OCI-LY7 (cell line): ENCODE measurements at regions of chr11 and their contacts with region 1.

Region 1: GRCh38 chr11:124763156-124763947 is 1.3 kb upstream of the ESAM start:
- DNase-seq: peak; percentile 86
- H3K4me3 ChIP-seq: peak overlapping the region; percentile 71
- H3K27ac ChIP-seq: no peak overlapping the region
- H3K4me1 ChIP-seq: peaks cover 38% of the 10 kb centered on the region
- CTCF ChIP-seq: peak; percentile 79

Region 2: GRCh38 chr11:124644426-124645280 is 118.7 kb before region 1 on chr11:
- CTCF ChIA-PET with region 1: no interaction called
- POLR2A ChIA-PET with region 1: no interaction called
- intact Hi-C with region 1: loop called (anchors 1 kb)
- DNase-seq: peak; percentile 51
- H3K4me3 ChIP-seq: no peak overlapping the region
- H3K27ac ChIP-seq: no peak overlapping the region
- H3K4me1 ChIP-seq: peaks cover 8% of the 10 kb centered on the region
- CTCF ChIP-seq: peak; percentile 94

Region 3: DNA sequence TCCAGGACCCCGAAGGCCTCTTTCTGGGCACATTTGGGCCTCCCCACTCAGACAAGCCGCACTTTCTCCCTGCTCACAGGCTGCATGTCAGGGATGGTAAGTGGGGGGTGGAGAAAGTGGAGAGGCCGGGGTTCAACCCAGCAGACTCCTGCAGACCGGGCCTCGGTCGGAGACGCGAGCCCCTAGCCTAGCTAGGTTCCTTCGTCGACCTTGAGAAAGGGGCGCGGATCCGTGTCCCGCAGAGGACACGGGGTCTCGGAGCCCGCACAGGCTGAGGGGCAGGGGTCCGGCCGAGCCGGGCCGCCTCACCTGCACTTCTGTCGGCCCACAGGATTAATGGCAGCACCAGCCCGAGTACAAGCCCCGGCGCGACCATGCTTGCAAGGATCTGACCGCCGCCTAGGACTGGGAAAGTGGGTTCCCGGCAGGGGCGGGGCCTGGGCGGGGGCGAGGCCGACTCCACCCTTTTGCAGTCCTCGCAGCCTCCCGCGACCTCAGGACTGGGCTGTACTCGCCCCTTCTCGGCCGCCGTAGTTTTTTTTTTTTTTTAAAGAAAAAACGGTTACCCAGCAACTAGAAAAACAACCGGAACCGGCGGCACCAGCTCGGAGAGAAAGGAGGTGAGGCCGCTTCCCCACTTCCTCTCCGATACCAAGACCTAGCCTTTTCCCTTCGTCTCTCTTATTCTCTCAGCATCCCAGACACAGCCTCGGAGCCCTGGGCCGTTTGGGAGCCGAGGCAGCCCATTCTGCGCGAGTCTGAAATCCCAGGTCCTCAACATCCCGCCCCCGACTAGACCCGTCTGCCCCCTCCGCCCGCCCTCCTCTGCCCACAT is 89.8 kb before region 1 on chr11 and contains the starts of genes SIAE and SPA17:
- CTCF ChIA-PET with region 1: interaction called, 9 read pairs
- POLR2A ChIA-PET with region 1: interaction called, 3 read pairs
- intact Hi-C with region 1: loop called (anchors 1 kb)
- DNase-seq: peak; percentile 93
- H3K4me3 ChIP-seq: peak within 1 kb of the TSS; percentile 79
- H3K27ac ChIP-seq: peak within 1 kb of the TSS; percentile 30
- H3K4me1 ChIP-seq: peaks cover 45% of the 10 kb centered on the region
- CTCF ChIP-seq: no peak
- total RNA-seq, gene SIAE: 2.6 and 4.8 TPM in 2 replicates
- total RNA-seq, gene SPA17: 2.4 and 5.1 TPM in 2 replicates

Region 4: DNA sequence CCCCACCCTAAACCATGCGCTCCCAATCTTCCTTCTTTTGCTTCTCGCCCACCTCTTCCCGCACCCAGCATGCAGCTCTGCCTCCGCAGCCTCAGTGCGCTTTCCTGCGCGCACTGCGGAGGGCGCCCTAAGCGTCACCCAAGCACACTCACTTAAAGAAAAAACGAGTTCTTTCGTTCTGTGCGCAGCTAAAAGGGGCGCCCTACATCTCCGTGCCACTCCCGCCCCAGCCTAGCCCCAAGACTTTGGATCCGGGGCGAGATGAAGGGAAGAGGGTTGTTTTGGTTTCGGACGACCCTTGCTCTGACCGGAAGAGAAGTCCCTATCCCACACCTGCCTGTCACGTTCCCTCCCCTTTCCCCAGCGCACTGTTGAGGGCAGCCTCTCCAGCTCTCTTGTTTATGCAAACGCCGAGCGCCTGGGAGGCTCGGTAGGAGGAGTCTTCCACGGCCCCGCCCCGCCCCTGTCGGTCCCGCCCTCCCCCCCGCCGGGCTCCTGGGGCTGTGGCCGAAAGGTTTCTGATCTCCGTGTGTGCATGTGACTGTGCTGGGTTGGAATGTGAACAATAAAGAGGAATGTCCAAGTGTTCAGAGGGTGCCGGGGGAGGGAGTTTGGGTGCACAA is 16.6 kb before region 1 on chr11:
- CTCF ChIA-PET with region 1: interaction called, 4 read pairs
- POLR2A ChIA-PET with region 1: interaction called, 5 read pairs
- intact Hi-C with region 1: loop called (anchors 1 kb)
- DNase-seq: peak; percentile 90
- H3K4me3 ChIP-seq: peak overlapping the region; percentile 70
- H3K27ac ChIP-seq: peak overlapping the region; percentile 61
- H3K4me1 ChIP-seq: peaks cover 23% of the 10 kb centered on the region
- CTCF ChIP-seq: peak; percentile 84

Region 5: GRCh38 chr11:124778281-124778680 is 14.9 kb after region 1 on chr11:
- CTCF ChIA-PET with region 1: no interaction called
- POLR2A ChIA-PET with region 1: interaction called, 10 read pairs
- intact Hi-C with region 1: no loop called
- DNase-seq: no peak
- H3K4me3 ChIP-seq: no peak overlapping the region
- H3K27ac ChIP-seq: no peak overlapping the region
- H3K4me1 ChIP-seq: peaks cover 7% of the 10 kb centered on the region
- CTCF ChIP-seq: peak; percentile 42

Region 6: DNA sequence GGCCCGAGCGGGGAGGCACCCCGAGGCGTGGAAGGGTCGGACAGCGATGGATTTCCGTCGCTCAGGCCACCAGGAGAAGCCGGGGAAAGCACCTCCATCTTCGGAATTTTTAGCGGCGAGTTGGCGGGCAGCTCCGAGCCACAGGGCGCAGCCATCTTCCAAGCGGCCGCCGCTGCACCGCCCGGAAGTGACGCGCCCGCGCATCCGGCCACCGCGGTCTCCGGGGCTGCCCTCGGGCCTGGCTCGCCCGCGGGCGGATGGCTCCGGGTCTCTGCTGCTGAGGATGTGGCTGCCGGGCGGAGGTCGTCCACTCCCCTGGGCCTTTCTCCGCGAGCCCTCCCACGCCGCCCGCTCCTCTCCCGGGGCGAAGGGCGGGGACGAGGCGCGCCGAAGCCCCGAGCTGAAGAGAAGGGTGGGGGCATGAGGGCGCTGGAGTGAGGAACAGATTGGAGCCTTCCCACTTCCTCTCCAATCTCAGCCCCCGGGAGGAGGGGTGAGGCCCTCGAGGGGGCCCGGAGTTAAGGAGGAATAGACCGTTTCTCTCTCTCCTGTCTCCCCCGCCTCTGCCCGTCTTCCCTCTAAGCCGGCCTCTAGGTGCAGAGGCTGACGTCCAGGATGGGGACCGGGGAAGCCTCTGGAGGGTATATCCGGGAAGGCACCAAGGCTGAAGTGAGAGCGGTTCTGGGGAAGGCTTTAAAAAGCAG is 37.0 kb after region 1 on chr11 and contains the start of gene MSANTD2:
- CTCF ChIA-PET with region 1: interaction called, 5 read pairs
- POLR2A ChIA-PET with region 1: interaction called, 15 read pairs
- intact Hi-C with region 1: loop called (anchors 1 kb)
- DNase-seq: peak; percentile 81
- H3K4me3 ChIP-seq: peak within 1 kb of the TSS; percentile 94
- H3K27ac ChIP-seq: peak within 1 kb of the TSS; percentile 83
- H3K4me1 ChIP-seq: peaks cover 37% of the 10 kb centered on the region
- CTCF ChIP-seq: peak; percentile 17; the same call in 1 of the 2 replicates
- total RNA-seq, gene MSANTD2: 17.7 and 22.1 TPM in 2 replicates

Region 7: GRCh38 chr11:124837491-124837856 is 74.1 kb after region 1 on chr11:
- CTCF ChIA-PET with region 1: interaction called, 3 read pairs
- POLR2A ChIA-PET with region 1: no interaction called
- intact Hi-C with region 1: loop called (anchors 1 kb)
- DNase-seq: peak; percentile 82
- H3K4me3 ChIP-seq: peak overlapping the region; percentile 52
- H3K27ac ChIP-seq: peak overlapping the region; percentile 70
- H3K4me1 ChIP-seq: peaks cover 30% of the 10 kb centered on the region
- CTCF ChIP-seq: peak; percentile 72